HepG2 (cell line): ENCODE measurements at regions of chr12 and their contacts with region 1.

Region 1: DNA sequence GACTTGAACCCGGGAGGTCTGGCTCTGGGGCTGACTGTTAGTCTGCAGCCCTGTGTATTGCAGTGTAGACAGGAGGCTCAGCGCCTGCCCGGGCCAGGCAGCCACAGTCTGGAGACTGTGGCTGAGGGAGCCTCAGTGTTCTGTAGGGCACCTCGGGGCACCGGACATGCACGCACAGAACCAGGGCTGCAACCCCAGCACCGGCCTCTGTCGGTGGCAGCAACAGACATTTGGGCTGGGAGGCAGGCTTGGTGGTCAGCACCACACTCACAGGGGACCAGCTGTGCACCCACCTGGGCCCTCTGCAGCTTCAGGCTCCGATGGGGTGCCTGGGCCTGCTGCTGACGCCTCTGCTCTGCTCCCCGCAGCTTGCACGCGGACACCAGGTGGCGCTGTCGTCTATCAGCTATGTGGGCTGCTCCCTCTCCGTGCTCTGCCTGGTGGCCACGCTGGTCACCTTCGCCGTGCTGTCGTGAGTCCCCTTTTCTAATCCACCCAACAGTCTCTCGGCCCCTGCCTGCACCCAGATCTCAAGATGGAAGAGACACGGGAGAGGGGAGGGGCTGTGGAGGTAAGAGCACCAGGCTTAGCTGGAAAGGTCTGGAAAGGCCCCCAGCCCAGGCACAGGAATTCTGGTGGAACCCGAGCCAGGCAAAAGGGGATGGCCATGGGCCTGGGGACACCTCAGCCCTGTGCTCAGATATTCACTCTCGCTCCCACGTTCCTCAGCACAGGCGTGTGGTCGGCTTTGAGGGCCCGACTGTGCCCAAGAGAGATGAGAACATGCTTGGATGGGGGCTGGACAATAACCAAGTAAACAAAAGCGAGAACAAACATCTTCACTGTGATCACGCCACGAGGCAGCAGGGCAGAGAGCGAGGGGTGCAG is 151.0 kb downstream of the ADGRD1 start:
- DNase-seq: peak; percentile 50
- ATAC-seq: peak; percentile 99
- H3K4me3 ChIP-seq: peak overlapping the region in 1 of 3 experiments; percentile 11; a peak in 1 of 6 replicates
- H3K27ac ChIP-seq: no peak overlapping the region
- H3K4me1 ChIP-seq: peaks cover 6% of the 10 kb centered on the region; the same call in 1 of the 2 replicates
- H3K27me3 ChIP-seq: peaks cover 0 to 1% of the 10 kb centered on the region in 2 experiments; a peak in 1 of 5 replicates
- CTCF ChIP-seq: peak; percentile 98
- EP300 ChIP-seq: no peak
- POLR2A ChIP-seq: no peak
- RAD21 ChIP-seq: peak; percentile 92

Region 2: GRCh38 chr12:131132118-131132892 is 27.6 kb after region 1 on chr12:
- CTCF ChIA-PET with region 1: interaction called, 9 read pairs
- POLR2A ChIA-PET with region 1: no interaction called
- in situ Hi-C with region 1: no loop called
- intact Hi-C with region 1: loop called (anchors 1 kb)
- DNase-seq: peak; percentile 53
- ATAC-seq: peak; percentile 88
- H3K4me3 ChIP-seq: no peak overlapping the region
- H3K27ac ChIP-seq: no peak overlapping the region
- H3K4me1 ChIP-seq: no peaks in the 10 kb centered on the region
- H3K27me3 ChIP-seq: no peaks in the 10 kb centered on the region; a peak in 1 of 5 replicates
- CTCF ChIP-seq: peak; percentile 93
- EP300 ChIP-seq: no peak
- POLR2A ChIP-seq: no peak
- RAD21 ChIP-seq: peak; percentile 82

Region 3: GRCh38 chr12:131189781-131190180 is 85.1 kb after region 1 on chr12:
- CTCF ChIA-PET with region 1: no interaction called
- POLR2A ChIA-PET with region 1: no interaction called
- in situ Hi-C with region 1: no loop called
- intact Hi-C with region 1: no loop called
- DNase-seq: no peak
- ATAC-seq: no peak
- H3K4me3 ChIP-seq: no peak overlapping the region
- H3K27ac ChIP-seq: no peak overlapping the region
- H3K4me1 ChIP-seq: no peaks in the 10 kb centered on the region
- H3K27me3 ChIP-seq: peaks cover 0 to 21% of the 10 kb centered on the region in 2 experiments; a peak in 2 of 5 replicates
- CTCF ChIP-seq: no peak
- EP300 ChIP-seq: no peak
- POLR2A ChIP-seq: no peak
- RAD21 ChIP-seq: no peak

Region 4: GRCh38 chr12:131454418-131455217 is 349.9 kb after region 1 on chr12:
- CTCF ChIA-PET with region 1: no interaction called
- POLR2A ChIA-PET with region 1: no interaction called
- in situ Hi-C with region 1: loop called (anchors 10 kb)
- intact Hi-C with region 1: no loop called
- DNase-seq: peak; percentile 60
- ATAC-seq: peak; percentile 100
- H3K4me3 ChIP-seq: no peak overlapping the region
- H3K27ac ChIP-seq: no peak overlapping the region
- H3K4me1 ChIP-seq: no peaks in the 10 kb centered on the region
- H3K27me3 ChIP-seq: peaks cover 4 to 28% of the 10 kb centered on the region in 2 experiments; a peak in 3 of 5 replicates
- CTCF ChIP-seq: peak; percentile 80
- EP300 ChIP-seq: peak in 1 of 2 experiments; percentile 52; a peak in 1 of 4 replicates
- POLR2A ChIP-seq: no peak
- RAD21 ChIP-seq: peak; percentile 73